ENCODE measurements at regions of chrX and their contacts with region 1.

Region 1: DNA sequence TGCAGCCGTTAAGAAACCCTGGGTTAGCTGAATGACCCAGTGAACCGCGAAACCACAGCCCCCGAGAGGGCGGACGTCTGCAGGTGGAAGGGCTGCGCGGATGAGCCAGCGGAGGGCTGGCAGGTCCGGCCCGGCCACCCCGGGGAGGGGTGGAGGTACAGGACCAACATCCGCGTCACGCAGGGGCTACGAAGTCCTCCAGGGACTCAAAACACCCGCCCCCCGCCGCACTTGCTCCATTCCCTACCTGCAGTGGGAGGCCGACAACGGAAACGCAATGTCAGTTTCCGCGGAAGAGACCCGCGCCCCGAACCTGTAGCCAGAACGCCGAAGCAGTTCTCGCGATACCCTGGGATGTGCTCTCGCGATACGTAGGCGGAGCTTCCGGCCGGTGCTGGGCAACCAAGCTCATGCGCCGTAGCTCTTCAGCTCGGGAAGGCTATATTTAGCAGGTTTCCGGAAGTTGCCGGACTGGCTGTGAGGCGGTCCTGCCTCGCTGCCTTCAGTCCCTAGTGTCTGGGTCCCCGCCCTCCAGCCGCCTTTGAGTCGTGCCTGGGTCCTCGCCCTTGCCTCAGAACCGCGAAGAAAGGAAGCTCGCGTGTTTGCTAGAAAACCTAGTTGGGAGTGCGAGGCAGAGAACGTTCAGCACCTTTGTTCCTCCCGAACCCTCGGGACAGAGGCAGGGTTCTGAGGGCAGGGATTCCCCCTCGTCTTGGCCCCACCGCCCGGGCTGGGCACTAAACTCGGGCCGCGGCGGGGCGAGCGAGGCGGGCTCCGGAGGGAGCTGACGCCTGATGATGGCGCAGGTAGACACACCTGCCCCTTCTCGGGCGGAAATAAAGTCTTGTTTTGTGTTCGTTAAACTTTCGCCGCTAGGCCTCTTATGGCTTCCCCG is at the starts of genes OFD1 and TRAPPC2:
- DNase-seq: peak; percentile 80
- ATAC-seq: peak; percentile 81
- H3K4me3 Mint-ChIP-seq: peak within 1 kb of the TSS; percentile 93
- H3K27ac Mint-ChIP-seq: peak within 1 kb of the TSS; percentile 92
- H3K4me1 Mint-ChIP-seq: peaks cover 60% of the 10 kb centered on the region
- H3K27me3 Mint-ChIP-seq: no peaks in the 10 kb centered on the region
- CTCF ChIP-seq: no peak
- total RNA-seq, gene OFD1: 57.3 and 61.4 TPM in 2 replicates
- total RNA-seq, gene TRAPPC2: 24.7 and 26.7 TPM in 2 replicates

Region 2: GRCh38 chrX:13653022-13653693 is 81.4 kb before region 1 on chrX and contains the start of gene TCEANC:
- CTCF ChIA-PET with region 1: interaction called, 4 read pairs
- POLR2A ChIA-PET with region 1: interaction called, 12 read pairs
- intact Hi-C with region 1: loop called (anchors 1 kb)
- DNase-seq: peak; percentile 79
- ATAC-seq: peak; percentile 93
- H3K4me3 Mint-ChIP-seq: peak within 1 kb of the TSS; percentile 91
- H3K27ac Mint-ChIP-seq: peak within 1 kb of the TSS; percentile 91
- H3K4me1 Mint-ChIP-seq: peaks cover 13% of the 10 kb centered on the region
- H3K27me3 Mint-ChIP-seq: no peaks in the 10 kb centered on the region
- CTCF ChIP-seq: no peak
- total RNA-seq, gene TCEANC: 5.1 and 5.9 TPM in 2 replicates

Region 3: DNA sequence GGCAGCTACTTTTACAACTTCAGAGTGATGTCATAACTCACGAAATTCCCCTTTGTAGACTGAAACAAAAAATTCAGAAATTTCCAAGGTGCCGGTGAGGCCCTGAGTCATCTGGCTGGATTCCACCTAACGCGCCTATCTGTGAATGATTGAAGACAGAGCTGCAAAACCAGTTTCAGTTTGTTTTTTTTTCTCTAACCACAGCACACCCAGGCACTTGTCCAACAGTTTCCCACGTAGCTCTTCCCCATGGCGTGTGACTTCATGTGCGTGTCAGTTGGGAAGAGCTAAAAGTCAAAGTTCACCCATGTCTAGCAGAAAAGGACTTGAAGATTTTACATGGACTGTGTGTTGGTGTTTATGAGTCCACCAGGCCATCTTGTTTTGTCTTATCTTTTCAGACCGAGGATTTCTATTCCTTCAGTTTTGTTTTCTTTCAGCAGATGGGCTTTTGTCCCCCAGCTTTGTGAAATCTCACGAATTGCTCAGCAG is 65.2 kb before region 1 on chrX:
- CTCF ChIA-PET with region 1: no interaction called
- POLR2A ChIA-PET with region 1: interaction called, 17 read pairs
- intact Hi-C with region 1: no loop called
- DNase-seq: no peak
- ATAC-seq: peak; percentile 85
- H3K4me3 Mint-ChIP-seq: peak overlapping the region; percentile 66
- H3K27ac Mint-ChIP-seq: peak overlapping the region; percentile 87
- H3K4me1 Mint-ChIP-seq: peaks cover 24% of the 10 kb centered on the region
- H3K27me3 Mint-ChIP-seq: no peaks in the 10 kb centered on the region
- CTCF ChIP-seq: no peak

Region 4: DNA sequence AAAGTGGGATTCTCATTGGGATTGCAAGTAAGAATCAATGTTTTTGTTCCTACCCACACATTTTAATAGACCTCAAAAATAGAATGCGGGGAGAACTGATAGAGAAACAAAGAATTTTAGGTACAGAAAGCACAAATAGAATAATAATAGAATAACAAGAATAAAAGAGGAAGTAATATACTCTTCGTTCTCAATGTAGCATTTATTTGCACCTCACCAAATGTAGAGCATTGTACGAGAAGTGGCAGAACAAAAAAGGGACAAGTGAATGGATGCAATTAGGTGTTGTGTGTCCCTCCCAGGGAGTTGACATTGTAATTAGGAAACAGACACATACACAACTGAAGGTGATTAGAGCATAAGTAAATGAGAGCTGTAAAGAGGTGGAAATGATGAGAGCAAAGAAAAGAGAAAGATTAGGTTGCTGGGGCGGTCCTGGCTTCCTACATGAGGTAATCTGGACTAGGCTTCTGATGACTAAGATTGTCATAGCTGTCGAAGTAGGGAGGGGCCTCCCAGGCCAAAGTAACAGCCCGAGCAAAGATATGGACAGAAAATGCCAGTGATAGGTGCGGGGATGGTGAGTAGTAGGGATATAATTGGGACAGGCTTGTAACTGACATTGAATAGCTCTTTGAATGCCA is 35.2 kb before region 1 on chrX:
- CTCF ChIA-PET with region 1: no interaction called
- POLR2A ChIA-PET with region 1: interaction called, 47 read pairs
- intact Hi-C with region 1: loop called (anchors 1 kb)
- DNase-seq: no peak
- ATAC-seq: peak; percentile 45
- H3K4me3 Mint-ChIP-seq: peak overlapping the region; percentile 64
- H3K27ac Mint-ChIP-seq: peak overlapping the region; percentile 83
- H3K4me1 Mint-ChIP-seq: peaks cover 84% of the 10 kb centered on the region
- H3K27me3 Mint-ChIP-seq: no peaks in the 10 kb centered on the region
- CTCF ChIP-seq: no peak

Region 5: DNA sequence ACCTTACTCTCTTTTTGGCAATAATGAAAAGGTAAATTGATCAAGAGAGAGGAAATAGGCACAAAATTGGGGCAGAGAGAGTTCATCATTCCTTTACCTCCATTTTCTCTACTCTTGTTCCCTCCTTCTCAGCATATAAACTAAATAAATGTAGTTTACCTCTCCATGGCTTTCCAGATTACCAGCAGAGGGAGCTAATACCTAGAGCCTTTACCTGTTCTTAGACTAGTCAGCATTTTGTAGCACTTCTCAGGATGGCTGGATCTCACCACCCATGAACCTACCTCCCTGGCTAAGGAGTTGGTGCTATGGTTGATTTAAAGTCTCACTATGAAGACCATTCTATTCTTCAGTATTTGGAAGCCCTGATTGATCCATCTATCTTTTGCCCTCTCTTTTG is 15.7 kb after region 1 on chrX:
- CTCF ChIA-PET with region 1: no interaction called
- POLR2A ChIA-PET with region 1: interaction called, 16 read pairs
- intact Hi-C with region 1: loop called (anchors 2 kb)
- DNase-seq: no peak
- ATAC-seq: peak; percentile 49
- H3K4me3 Mint-ChIP-seq: no peak overlapping the region
- H3K27ac Mint-ChIP-seq: peak overlapping the region; percentile 41
- H3K4me1 Mint-ChIP-seq: peaks cover 42% of the 10 kb centered on the region
- H3K27me3 Mint-ChIP-seq: no peaks in the 10 kb centered on the region
- CTCF ChIP-seq: no peak

Region 6: GRCh38 chrX:13898083-13898482 is 163.6 kb after region 1 on chrX:
- CTCF ChIA-PET with region 1: no interaction called
- POLR2A ChIA-PET with region 1: no interaction called
- intact Hi-C with region 1: no loop called
- DNase-seq: no peak
- ATAC-seq: no peak
- H3K4me3 Mint-ChIP-seq: no peak overlapping the region
- H3K27ac Mint-ChIP-seq: no peak overlapping the region
- H3K4me1 Mint-ChIP-seq: no peaks in the 10 kb centered on the region
- H3K27me3 Mint-ChIP-seq: no peaks in the 10 kb centered on the region
- CTCF ChIP-seq: no peak

Region 7: GRCh38 chrX:14194711-14195110 is 460.2 kb after region 1 on chrX:
- CTCF ChIA-PET with region 1: no interaction called
- POLR2A ChIA-PET with region 1: no interaction called
- intact Hi-C with region 1: no loop called
- DNase-seq: no peak
- ATAC-seq: no peak
- H3K4me3 Mint-ChIP-seq: no peak overlapping the region
- H3K27ac Mint-ChIP-seq: no peak overlapping the region
- H3K4me1 Mint-ChIP-seq: no peaks in the 10 kb centered on the region
- H3K27me3 Mint-ChIP-seq: no peaks in the 10 kb centered on the region
- CTCF ChIP-seq: no peak

Measured in activated B cell treated with CpG ODN at 0.5 μM for 24 hours (primary cell).